BJ (cell line): ENCODE measurements at regions of chr18 and their contacts with region 1.

Region 1: GRCh38 chr18:59085797-59086196 is 53.9 kb upstream of the SEC11C start:
- DNase-seq: no peak
- H3K4me3 ChIP-seq: no peak overlapping the region
- H3K27me3 ChIP-seq: peaks cover 1% of the 10 kb centered on the region
- CTCF ChIP-seq: no peak

Region 2: DNA sequence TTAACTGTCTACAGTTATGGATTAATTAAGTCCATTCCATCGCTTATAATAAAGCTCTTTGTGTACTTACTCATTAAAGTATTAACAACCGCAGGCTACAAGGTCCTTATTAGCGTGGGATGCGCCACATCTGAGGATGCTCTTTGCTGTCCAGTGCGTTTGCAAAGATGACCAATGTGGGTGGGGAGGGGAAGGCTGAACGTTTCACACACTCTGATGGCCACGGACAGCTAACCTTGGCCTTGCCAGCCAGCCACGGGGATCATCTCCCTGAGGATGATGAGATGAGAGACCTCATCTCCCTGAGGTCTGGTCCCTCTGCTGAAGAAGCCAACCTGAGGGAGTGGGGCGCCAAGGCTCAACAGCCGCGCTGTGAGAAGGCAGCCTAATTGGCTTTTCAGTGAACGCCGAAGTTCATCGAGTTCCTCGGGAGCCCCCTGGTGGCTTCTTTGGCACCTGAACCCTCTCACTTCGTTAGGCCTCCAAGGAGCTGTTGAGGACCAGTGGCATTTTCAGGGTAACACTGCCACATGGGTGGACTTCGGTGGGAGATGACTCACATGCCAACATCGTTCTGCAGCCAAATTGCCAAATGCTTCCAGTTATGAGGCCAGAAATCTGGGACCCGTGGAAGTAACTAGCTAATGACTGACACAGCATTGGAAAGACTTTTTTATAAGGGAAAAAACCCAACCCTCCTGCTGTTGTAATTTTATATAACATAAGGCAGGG is 15.4 kb before region 1 on chr18:
- CTCF ChIA-PET with region 1: interaction called, 55 read pairs
- POLR2A ChIA-PET with region 1: no interaction called
- DNase-seq: no peak
- H3K4me3 ChIP-seq: no peak overlapping the region
- H3K27me3 ChIP-seq: no peaks in the 10 kb centered on the region
- CTCF ChIP-seq: peak; percentile 89

Region 3: GRCh38 chr18:59395226-59396110 is 309.7 kb after region 1 on chr18:
- CTCF ChIA-PET with region 1: no interaction called
- POLR2A ChIA-PET with region 1: no interaction called
- DNase-seq: no peak
- H3K4me3 ChIP-seq: no peak overlapping the region
- H3K27me3 ChIP-seq: no peaks in the 10 kb centered on the region
- CTCF ChIP-seq: no peak